CD4-positive, alpha-beta memory T cell (primary cell): ENCODE measurements at regions of chr12 and their contacts with region 1.

Region 1: DNA sequence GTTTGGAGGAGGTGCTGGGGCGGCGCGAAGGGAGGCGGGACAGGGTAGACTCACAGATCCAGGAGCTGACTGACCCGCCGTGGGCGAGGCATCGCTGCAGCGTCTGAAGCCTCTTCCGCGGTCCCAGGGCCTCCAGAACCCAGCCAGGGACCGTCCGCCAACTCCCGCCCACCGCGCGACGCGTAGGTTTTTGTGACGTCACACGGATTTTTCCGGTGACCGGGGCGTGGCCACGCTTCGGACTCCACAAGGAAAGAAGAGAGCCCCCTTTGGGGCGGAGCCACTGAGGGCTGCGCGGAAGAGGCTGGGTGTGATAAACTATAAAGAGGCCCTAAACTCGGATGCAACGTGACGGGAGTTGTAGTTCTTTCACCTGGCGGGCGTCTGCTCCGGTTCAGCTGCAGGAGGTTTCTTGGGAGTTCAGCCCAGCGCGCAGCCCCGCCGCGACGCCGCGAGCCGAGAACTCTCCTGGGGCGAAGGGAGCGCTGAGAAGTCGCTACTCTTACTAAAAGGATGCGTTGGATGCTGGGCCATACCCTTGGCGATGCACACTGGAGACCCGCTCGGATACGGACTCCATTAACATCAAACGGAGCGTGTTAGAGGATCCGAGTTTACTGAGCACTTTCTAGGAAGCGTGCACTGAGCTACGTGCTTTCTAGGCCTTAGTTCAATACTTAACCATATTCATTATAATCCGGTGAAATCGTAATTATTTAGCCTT is at the start of gene AMN1:
- DNase-seq: peak; percentile 98 to 100 (median 99)
- H3K4me3 ChIP-seq: peak within 1 kb of the TSS; percentile 88 to 99
- H3K4me3 Mint-ChIP-seq: peak within 1 kb of the TSS; percentile 98 to 100 (median 99)
- H3K27ac ChIP-seq: peak within 1 kb of the TSS; percentile 81
- H3K27ac Mint-ChIP-seq: peak within 1 kb of the TSS; percentile 97 to 100 (median 99)
- H3K4me1 ChIP-seq: peaks cover 54% of the 10 kb centered on the region
- H3K4me1 Mint-ChIP-seq: peaks cover 39 to 76% (median 55%) of the 10 kb centered on the region in 4 donors
- H3K27me3 ChIP-seq: no peaks in the 10 kb centered on the region
- H3K27me3 Mint-ChIP-seq: no peaks in the 10 kb centered on the region
- total RNA-seq, gene AMN1: 15.3 to 18.4 TPM

Region 2: GRCh38 chr12:31682136-31682962 is 46.7 kb before region 1 on chr12:
- CTCF ChIA-PET with region 1: interaction called, 7 read pairs
- POLR2A ChIA-PET with region 1: interaction called, 8 read pairs
- intact Hi-C with region 1: loop called (anchors 1 kb)
- DNase-seq: peak; percentile 68 to 73 (median 71)
- H3K4me3 ChIP-seq: no peak overlapping the region
- H3K4me3 Mint-ChIP-seq: peak overlapping the region in 4 of 8 donors; percentile 58 to 80 (median 71)
- H3K27ac ChIP-seq: no peak overlapping the region
- H3K27ac Mint-ChIP-seq: peak overlapping the region; percentile 53 to 92 (median 88)
- H3K4me1 ChIP-seq: no peaks in the 10 kb centered on the region
- H3K4me1 Mint-ChIP-seq: peaks cover 6 to 15% (median 9%) of the 10 kb centered on the region in 4 donors
- H3K27me3 ChIP-seq: no peaks in the 10 kb centered on the region
- H3K27me3 Mint-ChIP-seq: no peaks in the 10 kb centered on the region

Region 3: DNA sequence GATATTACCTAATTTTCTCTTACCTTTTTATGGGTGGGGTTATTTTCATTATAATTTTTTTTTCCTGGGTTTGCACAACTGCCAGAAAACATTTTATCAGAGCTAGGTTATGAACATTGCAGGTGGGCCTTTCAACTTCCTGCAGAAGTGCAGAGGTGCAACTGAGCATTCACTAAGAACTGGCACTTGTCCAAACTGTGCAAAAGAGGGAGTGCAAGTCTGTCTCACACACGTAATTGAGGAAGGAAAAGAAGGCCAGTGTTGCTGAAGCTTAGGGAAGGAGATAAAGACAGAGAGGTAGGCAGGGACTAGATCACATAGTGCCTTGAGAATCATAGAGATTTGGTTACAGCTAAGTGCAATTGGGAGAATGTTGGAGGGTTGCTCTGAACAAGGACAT is 13.8 kb after region 1 on chr12:
- CTCF ChIA-PET with region 1: interaction called, 3 read pairs
- POLR2A ChIA-PET with region 1: interaction called, 13 read pairs
- intact Hi-C with region 1: no loop called
- DNase-seq: peak in 1 of 5 donors; percentile 25
- H3K4me3 ChIP-seq: no peak overlapping the region
- H3K4me3 Mint-ChIP-seq: peak overlapping the region in 4 of 8 donors; percentile 0 to 68 (median 42)
- H3K27ac ChIP-seq: no peak overlapping the region
- H3K27ac Mint-ChIP-seq: peak overlapping the region in 6 of 7 donors; percentile 6 to 92 (median 55)
- H3K4me1 ChIP-seq: peaks cover 36% of the 10 kb centered on the region
- H3K4me1 Mint-ChIP-seq: peaks cover 32 to 72% (median 55%) of the 10 kb centered on the region in 4 donors
- H3K27me3 ChIP-seq: no peaks in the 10 kb centered on the region
- H3K27me3 Mint-ChIP-seq: no peaks in the 10 kb centered on the region

Region 4: DNA sequence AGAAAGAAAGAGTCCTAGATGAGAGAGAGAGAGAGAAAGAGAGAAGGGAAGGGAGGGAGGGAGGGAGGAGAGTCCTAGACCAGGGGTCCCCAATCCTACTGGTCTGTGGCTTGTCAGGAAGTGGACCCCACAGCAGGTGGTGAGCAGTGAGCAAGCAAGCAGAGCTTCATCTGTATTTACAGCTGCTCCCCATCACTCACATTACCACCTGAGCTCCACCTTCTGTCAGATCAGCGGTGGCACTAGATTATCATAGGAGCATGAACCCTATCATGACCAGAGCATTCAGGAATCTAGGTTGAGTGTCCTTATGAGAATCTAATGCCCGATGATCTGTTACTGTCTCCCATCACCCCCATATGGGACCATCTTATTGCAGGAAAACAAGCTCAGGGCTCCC is 39.0 kb after region 1 on chr12:
- CTCF ChIA-PET with region 1: interaction called, 4 read pairs
- POLR2A ChIA-PET with region 1: no interaction called
- intact Hi-C with region 1: loop called (anchors 5 kb)
- DNase-seq: no peak
- H3K4me3 ChIP-seq: no peak overlapping the region
- H3K4me3 Mint-ChIP-seq: no peak overlapping the region
- H3K27ac ChIP-seq: no peak overlapping the region
- H3K27ac Mint-ChIP-seq: peak overlapping the region in 5 of 7 donors; percentile 7 to 91 (median 66)
- H3K4me1 ChIP-seq: no peaks in the 10 kb centered on the region
- H3K4me1 Mint-ChIP-seq: peaks cover 5 to 20% (median 17%) of the 10 kb centered on the region in 4 donors
- H3K27me3 ChIP-seq: no peaks in the 10 kb centered on the region
- H3K27me3 Mint-ChIP-seq: no peaks in the 10 kb centered on the region

Region 5: DNA sequence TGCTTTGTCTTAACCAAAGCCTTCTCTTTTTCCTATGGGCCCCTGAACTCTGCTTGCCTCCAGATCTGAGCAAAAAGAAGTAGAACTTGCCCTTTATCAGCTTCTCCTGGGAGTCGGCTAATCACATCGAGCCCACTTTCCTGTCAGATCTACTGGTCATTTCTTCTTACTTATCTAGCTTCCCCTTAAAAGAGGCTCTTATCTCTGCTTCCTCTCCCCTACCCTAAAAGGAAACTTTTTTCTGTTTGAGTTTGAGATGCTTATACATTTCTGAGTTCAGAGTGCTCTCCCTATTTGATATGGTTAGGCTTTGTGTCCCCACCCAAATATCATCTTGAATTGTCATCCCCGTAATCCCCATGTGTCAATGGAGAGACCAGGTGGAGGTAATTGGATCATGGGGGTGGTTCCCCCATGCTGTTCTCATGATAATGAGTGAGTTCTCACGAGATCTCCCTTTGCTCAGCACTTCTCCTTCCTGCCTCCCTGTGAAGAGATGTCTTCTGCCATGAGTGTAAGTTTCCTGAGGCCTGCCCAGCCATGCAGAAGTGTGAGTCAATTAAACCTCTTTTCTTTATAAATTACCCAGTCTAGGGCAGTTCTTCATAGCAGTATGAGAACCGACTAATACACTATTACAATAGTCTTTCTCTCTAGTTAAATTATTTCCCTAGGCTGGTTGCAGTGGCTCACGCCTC is 114.5 kb after region 1 on chr12:
- CTCF ChIA-PET with region 1: no interaction called
- POLR2A ChIA-PET with region 1: no interaction called
- intact Hi-C with region 1: no loop called
- DNase-seq: no peak
- H3K4me3 ChIP-seq: no peak overlapping the region
- H3K4me3 Mint-ChIP-seq: no peak overlapping the region
- H3K27ac ChIP-seq: no peak overlapping the region
- H3K27ac Mint-ChIP-seq: peak overlapping the region in 1 of 7 donors; percentile 43
- H3K4me1 ChIP-seq: no peaks in the 10 kb centered on the region
- H3K4me1 Mint-ChIP-seq: peaks cover 4 to 23% (median 7%) of the 10 kb centered on the region in 4 donors
- H3K27me3 ChIP-seq: no peaks in the 10 kb centered on the region
- H3K27me3 Mint-ChIP-seq: no peaks in the 10 kb centered on the region

Region 6: DNA sequence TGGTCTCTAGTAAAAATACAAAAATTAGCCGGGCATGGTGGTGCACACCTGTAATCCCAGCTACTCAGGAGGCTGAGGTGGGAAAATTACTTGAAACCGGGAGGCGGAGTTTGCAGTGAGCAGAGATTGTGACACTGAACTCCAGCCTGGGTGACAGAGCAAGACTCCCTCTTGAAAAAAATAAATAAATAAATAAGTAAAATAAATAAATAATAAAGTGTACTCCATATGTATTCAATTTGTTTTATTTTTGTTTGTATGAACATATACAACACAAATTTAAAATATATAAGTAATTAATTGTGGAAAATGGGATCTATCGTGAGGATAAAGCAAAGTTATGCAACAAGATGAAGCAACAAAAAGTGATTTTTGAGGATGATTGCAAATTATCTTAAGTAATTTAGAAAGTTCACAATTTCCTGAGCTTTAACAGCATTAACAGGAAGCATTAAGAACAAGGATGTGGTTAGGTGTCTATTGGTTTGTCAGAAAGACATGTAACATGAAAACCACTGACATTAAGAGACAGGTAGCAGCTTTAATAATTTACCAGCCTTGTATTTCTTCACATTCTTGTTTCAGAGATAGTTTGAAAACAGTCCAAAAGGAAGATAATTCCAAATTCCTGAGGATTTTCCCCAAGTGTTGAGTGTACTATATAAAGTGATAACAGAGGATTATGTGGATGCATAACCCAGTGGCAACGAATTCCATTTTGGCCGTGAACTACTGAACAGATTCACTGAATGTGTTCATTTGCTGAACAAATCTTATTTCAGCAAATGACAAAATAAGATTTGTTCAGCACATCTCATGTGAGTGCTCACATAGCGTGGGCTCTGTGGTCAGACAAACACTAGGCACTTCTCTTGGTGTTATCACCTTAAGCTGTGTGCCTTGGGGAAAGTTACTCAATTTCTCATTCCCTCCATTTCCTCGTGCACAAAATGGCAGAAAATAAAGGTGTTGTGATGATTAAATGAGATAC is 161.5 kb after region 1 on chr12:
- CTCF ChIA-PET with region 1: interaction called, 11 read pairs
- POLR2A ChIA-PET with region 1: interaction called, 57 read pairs
- intact Hi-C with region 1: no loop called
- DNase-seq: peak in 4 of 5 donors; percentile 63 to 75 (median 70)
- H3K4me3 ChIP-seq: peak overlapping the region in 1 of 2 donors; percentile 15
- H3K4me3 Mint-ChIP-seq: peak overlapping the region; percentile 20 to 81 (median 70)
- H3K27ac ChIP-seq: peak overlapping the region; percentile 33
- H3K27ac Mint-ChIP-seq: peak overlapping the region; percentile 85 to 91 (median 89)
- H3K4me1 ChIP-seq: peaks cover 81% of the 10 kb centered on the region
- H3K4me1 Mint-ChIP-seq: peaks cover 36 to 76% (median 53%) of the 10 kb centered on the region in 4 donors
- H3K27me3 ChIP-seq: no peaks in the 10 kb centered on the region
- H3K27me3 Mint-ChIP-seq: no peaks in the 10 kb centered on the region

Region 7: GRCh38 chr12:31928246-31929026 is 199.4 kb after region 1 on chr12:
- CTCF ChIA-PET with region 1: no interaction called
- POLR2A ChIA-PET with region 1: interaction called, 14 read pairs
- intact Hi-C with region 1: no loop called
- DNase-seq: peak in 4 of 5 donors; percentile 41 to 58 (median 50)
- H3K4me3 ChIP-seq: peak overlapping the region in 1 of 2 donors; percentile 22
- H3K4me3 Mint-ChIP-seq: peak overlapping the region; percentile 86 to 95 (median 90)
- H3K27ac ChIP-seq: peak overlapping the region; percentile 56
- H3K27ac Mint-ChIP-seq: peak overlapping the region; percentile 96 to 99 (median 97)
- H3K4me1 ChIP-seq: peaks cover 47% of the 10 kb centered on the region
- H3K4me1 Mint-ChIP-seq: peaks cover 43 to 61% (median 52%) of the 10 kb centered on the region in 4 donors
- H3K27me3 ChIP-seq: no peaks in the 10 kb centered on the region
- H3K27me3 Mint-ChIP-seq: no peaks in the 10 kb centered on the region

Region 8: DNA sequence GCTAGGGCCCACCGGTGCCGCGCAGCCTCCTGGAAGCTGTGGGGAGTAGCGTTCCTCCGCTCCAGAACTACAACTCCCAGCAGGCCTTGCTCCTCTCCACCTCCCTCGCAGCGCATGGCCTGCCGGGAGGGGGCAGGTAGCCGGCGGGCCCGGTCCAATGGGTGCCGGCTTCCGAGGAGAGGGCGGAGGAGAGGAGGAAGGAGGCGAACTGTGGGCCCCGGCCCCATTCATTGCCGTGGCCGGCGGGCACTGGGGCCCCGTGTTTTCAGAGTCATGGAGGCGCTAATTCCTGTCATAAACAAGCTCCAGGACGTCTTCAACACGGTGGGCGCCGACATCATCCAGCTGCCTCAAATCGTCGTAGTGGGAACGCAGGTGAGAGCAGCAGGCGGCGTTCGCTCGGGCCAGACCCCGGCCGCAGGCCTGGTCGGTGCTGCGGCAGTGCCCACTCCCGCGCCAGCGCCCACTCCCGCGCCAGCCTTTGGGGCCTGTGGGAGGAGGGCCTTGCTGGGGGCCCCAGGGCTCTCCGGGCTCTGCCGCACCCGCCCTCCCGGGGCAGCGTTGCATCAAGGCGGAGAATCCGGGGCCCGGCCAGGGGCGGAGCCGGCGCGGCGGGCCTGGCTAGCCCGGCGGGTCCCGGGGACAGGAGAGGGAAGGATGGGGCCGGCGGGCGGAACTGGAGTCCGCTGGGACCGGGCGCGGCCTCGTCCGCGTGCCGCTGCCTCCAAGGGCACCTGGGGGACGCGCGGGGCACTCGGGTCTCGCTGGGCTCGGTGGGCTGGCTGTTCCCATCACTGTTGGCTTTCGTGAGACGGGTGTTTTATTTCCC is 950.2 kb after region 1 on chr12 and contains the start of gene DNM1L:
- CTCF ChIA-PET with region 1: no interaction called
- POLR2A ChIA-PET with region 1: no interaction called
- intact Hi-C with region 1: loop called (anchors 2 kb)
- DNase-seq: peak; percentile 91 to 95 (median 93)
- H3K4me3 ChIP-seq: peak within 1 kb of the TSS; percentile 65 to 69
- H3K4me3 Mint-ChIP-seq: peak within 1 kb of the TSS; percentile 89 to 97 (median 94)
- H3K27ac ChIP-seq: peak within 1 kb of the TSS; percentile 87
- H3K27ac Mint-ChIP-seq: peak within 1 kb of the TSS; percentile 80 to 97 (median 94)
- H3K4me1 ChIP-seq: peaks cover 18% of the 10 kb centered on the region
- H3K4me1 Mint-ChIP-seq: peaks cover 14 to 37% (median 27%) of the 10 kb centered on the region in 4 donors
- H3K27me3 ChIP-seq: no peaks in the 10 kb centered on the region
- H3K27me3 Mint-ChIP-seq: no peaks in the 10 kb centered on the region
- total RNA-seq, gene DNM1L: 42.7 to 50.1 TPM